MCF 10A (cell line): ENCODE measurements at regions of chr5 and their contacts with region 1.

Region 1: GRCh38 chr5:173887610-173888472 is at the start of gene CPEB4:
- DNase-seq: peak; percentile 100
- H3K4me3 Mint-ChIP-seq: peak within 1 kb of the TSS; percentile 97
- H3K27ac Mint-ChIP-seq: peak within 1 kb of the TSS; percentile 99
- H3K4me1 Mint-ChIP-seq: peaks cover 49% of the 10 kb centered on the region
- H3K27me3 Mint-ChIP-seq: no peaks in the 10 kb centered on the region
- CTCF ChIP-seq: no peak
- total RNA-seq, gene CPEB4: 86.7 and 99.0 TPM in 2 replicates

Region 2: GRCh38 chr5:173204185-173204979 is 683.5 kb before region 1 on chr5:
- CTCF ChIA-PET with region 1: no interaction called
- POLR2A ChIA-PET with region 1: no interaction called
- intact Hi-C with region 1: no loop called
- DNase-seq: peak; percentile 67
- H3K4me3 Mint-ChIP-seq: no peak overlapping the region
- H3K27ac Mint-ChIP-seq: no peak overlapping the region
- H3K4me1 Mint-ChIP-seq: peaks cover 26% of the 10 kb centered on the region
- H3K27me3 Mint-ChIP-seq: peaks cover 33% of the 10 kb centered on the region
- CTCF ChIP-seq: peak; percentile 66

Region 3: GRCh38 chr5:173536312-173536641 is 351.6 kb before region 1 on chr5:
- CTCF ChIA-PET with region 1: no interaction called
- POLR2A ChIA-PET with region 1: no interaction called
- intact Hi-C with region 1: no loop called
- DNase-seq: peak; percentile 23
- H3K4me3 Mint-ChIP-seq: no peak overlapping the region
- H3K27ac Mint-ChIP-seq: no peak overlapping the region
- H3K4me1 Mint-ChIP-seq: peaks cover 11% of the 10 kb centered on the region
- H3K27me3 Mint-ChIP-seq: no peaks in the 10 kb centered on the region
- CTCF ChIP-seq: no peak

Region 4: DNA sequence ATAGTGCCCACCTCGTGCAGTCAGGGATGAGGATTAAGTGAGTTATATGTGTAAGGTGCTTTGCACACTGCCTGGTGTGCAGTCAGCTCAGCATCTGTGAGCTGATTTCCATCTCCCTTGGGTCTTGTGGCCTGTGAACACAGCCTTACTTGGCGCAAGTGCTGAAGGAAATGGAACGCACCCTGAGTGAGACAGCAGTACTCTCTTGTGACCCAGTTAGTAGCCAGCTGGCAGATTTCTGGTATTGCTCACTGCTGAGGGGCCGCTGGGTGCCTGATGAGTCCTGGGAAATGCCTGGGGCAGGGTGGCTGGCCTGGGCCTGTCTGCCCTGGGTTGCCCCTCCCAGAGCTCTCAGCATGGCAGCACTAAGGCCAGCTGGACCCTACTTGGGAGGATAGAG is 180.4 kb before region 1 on chr5:
- CTCF ChIA-PET with region 1: no interaction called
- POLR2A ChIA-PET with region 1: interaction called, 11 read pairs
- intact Hi-C with region 1: no loop called
- DNase-seq: peak; percentile 91
- H3K4me3 Mint-ChIP-seq: no peak overlapping the region
- H3K27ac Mint-ChIP-seq: peak overlapping the region; percentile 24
- H3K4me1 Mint-ChIP-seq: peaks cover 20% of the 10 kb centered on the region
- H3K27me3 Mint-ChIP-seq: no peaks in the 10 kb centered on the region
- CTCF ChIP-seq: no peak

Region 5: DNA sequence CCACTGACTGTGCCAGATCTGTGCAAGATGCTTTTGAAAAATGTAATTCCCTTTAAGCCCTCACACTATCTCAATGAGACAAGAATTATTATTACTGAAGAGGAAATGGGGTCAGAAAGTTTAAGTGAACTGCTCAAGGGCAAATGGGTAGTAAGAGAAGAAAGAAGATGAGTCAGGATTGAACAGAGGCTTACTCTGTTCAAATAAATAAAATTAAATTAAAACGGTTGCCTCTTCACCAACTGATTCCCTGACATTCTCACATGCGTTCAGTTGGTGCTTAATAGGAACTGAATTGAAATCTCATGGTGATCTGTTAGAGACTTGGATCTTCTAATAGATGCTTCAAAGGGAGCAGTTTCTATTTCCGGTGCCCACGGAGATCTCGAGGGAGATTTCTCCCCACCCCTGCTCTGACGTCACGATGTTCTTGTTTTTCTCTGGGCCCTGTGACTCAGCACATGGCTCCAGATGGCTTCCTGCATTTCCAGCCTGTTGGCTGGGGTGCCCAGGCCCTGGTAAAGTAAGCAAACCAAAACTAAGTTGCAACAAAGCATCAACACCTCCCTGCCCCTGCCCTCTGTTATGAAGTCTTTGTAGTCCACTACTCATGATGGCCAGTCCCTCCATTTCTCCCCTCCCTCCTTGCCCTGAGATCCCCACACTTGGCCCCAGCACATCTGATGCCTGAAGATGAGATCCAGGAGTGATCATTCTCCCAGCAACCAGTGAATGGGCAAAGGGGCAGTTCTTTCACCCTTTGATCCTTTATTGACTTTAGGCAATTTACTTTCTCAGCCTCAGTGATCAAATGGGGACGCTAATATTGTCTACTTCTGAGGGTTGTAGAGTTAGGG is 105.8 kb before region 1 on chr5:
- CTCF ChIA-PET with region 1: interaction called, 6 read pairs
- POLR2A ChIA-PET with region 1: interaction called, 20 read pairs
- intact Hi-C with region 1: loop called (anchors 2 kb)
- DNase-seq: peak; percentile 96
- H3K4me3 Mint-ChIP-seq: peak overlapping the region; percentile 39
- H3K27ac Mint-ChIP-seq: peak overlapping the region; percentile 99
- H3K4me1 Mint-ChIP-seq: peaks cover 43% of the 10 kb centered on the region
- H3K27me3 Mint-ChIP-seq: no peaks in the 10 kb centered on the region
- CTCF ChIP-seq: no peak

Region 6: DNA sequence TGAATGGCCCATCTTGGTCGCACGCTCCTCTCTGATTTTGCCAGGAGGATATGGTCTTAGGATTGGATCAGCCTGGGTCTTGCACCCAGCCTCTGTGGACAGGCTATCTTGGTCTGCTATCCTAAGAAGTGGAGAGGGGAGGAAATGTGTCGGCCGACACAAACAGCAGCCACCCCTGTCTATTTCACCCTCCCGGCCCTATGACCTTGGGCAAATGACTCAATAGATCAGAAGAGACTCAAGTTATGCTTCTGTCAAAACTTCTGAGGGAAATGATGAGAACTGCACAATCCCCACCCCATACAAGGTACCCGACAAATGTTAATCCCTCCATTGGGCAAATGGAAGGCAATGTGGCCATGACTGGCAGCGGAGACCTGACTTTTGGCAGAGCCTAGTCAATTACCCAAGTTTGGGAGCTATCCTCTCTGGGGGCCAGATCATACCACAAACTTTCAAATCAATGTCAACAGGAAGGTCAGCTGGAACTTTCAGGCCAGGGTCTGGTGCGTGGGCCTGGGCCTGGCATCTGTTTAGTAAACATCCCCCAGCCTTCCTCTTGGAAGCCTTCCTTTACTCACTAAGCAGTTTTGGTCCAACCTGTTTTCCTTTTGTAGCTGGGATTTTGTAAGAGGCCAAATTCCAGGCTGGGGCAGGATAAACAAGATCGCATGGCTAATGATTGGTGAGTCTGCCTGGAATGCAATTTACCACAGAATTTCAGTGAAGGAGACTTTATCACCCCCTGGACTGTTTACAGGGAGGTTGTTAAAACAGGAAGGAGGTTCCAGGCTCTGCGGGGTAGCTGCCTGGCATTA is 63.9 kb before region 1 on chr5:
- CTCF ChIA-PET with region 1: interaction called, 4 read pairs
- POLR2A ChIA-PET with region 1: interaction called, 17 read pairs
- intact Hi-C with region 1: no loop called
- DNase-seq: peak; percentile 94
- H3K4me3 Mint-ChIP-seq: no peak overlapping the region
- H3K27ac Mint-ChIP-seq: peak overlapping the region; percentile 83
- H3K4me1 Mint-ChIP-seq: peaks cover 34% of the 10 kb centered on the region
- H3K27me3 Mint-ChIP-seq: no peaks in the 10 kb centered on the region
- CTCF ChIP-seq: no peak

Region 7: DNA sequence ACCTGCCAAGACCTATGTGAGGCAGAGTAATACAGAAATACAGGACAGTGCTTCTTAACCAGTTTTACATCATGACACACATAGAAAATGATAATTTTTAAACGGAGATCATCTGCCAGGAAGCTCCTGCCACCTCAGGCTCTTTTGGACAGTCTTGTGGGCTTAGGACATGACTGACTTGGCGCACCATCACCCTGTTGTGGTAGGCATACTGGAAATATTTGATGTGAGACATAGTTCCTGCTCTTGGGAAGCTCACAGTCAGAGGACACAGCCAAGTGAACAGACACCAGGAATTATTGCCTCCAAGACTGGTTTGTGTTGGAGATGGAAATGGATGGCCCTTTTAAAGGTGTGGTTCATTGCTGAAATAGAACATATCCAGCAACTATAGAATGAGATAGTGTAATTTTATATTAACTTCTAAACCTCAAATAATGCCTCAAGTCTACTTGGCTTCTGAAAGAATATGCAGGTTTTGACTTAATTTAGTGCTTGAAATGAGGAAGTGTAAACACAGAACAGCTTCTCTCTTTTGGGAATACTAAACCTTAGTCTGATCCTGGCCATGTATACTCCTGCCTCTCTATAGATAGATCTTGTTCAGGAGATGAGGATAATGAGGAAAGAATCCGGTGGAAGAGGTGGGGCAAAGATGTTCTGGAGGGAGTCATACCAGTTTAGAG is 20.0 kb after region 1 on chr5:
- CTCF ChIA-PET with region 1: interaction called, 4 read pairs
- POLR2A ChIA-PET with region 1: interaction called, 149 read pairs
- intact Hi-C with region 1: no loop called
- DNase-seq: no peak
- H3K4me3 Mint-ChIP-seq: no peak overlapping the region
- H3K27ac Mint-ChIP-seq: peak overlapping the region; percentile 11
- H3K4me1 Mint-ChIP-seq: peaks cover 28% of the 10 kb centered on the region
- H3K27me3 Mint-ChIP-seq: no peaks in the 10 kb centered on the region
- CTCF ChIP-seq: no peak

Region 8: DNA sequence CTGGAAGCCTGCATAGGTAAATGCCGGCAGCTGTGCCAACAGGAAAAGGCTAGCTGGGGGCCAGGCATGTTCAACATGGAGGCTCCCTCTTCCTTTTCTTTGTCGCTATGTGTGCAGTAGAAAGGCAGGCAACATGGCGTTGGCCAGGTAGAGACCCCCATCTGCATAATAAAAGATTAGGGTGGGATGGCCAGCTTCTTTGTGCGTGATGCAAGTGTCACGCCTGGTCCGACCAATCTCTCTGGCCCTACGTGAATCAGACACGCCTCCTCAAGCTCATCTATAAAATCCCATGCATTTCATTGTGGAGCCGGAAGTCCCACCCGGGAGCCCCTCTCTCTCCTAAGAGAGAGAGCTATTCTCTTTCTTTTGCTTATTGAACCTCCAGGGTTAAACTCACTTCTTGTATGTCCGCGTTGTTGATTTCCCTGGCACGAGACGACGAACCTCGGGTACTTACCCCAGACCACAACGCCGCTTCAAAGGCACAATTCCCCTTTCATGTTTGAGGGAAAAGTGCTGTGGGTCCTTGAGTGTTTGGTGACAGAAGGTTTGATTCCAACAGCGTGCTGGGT is 76.1 kb after region 1 on chr5:
- CTCF ChIA-PET with region 1: no interaction called
- POLR2A ChIA-PET with region 1: interaction called, 8 read pairs
- intact Hi-C with region 1: loop called (anchors 2 kb)
- DNase-seq: no peak
- H3K4me3 Mint-ChIP-seq: peak overlapping the region; percentile 67
- H3K27ac Mint-ChIP-seq: no peak overlapping the region
- H3K4me1 Mint-ChIP-seq: peaks cover 15% of the 10 kb centered on the region
- H3K27me3 Mint-ChIP-seq: no peaks in the 10 kb centered on the region
- CTCF ChIP-seq: no peak

Region 9: GRCh38 chr5:174134574-174134973 is 246.7 kb after region 1 on chr5:
- CTCF ChIA-PET with region 1: no interaction called
- POLR2A ChIA-PET with region 1: no interaction called
- intact Hi-C with region 1: no loop called
- DNase-seq: no peak
- H3K4me3 Mint-ChIP-seq: no peak overlapping the region
- H3K27ac Mint-ChIP-seq: no peak overlapping the region
- H3K4me1 Mint-ChIP-seq: no peaks in the 10 kb centered on the region
- H3K27me3 Mint-ChIP-seq: no peaks in the 10 kb centered on the region
- CTCF ChIP-seq: no peak